Posterior vena cava (tissue), 2 donors: ENCODE measurements at regions of chr10 and their contacts with region 1.

Region 1: DNA sequence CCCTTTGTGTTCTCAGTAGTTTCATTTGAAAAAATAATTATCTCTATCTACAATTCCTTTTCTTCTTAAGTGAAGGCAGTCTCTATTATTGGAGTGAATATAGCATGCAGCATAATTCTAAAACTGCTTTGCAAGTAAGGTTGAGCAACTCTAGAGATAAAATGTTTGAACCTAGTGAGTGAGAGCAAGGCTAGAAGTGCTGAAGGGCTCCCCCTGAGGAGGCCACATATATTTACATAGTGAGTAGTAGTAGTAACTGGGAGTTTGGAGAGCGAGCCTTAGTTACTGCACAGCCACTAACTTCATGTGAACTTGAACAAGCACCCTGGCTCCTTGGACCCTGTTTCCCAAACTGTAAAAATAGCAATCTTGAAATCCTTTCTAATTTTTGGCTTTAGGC is 141.5 kb upstream of the DKK1 start:
- DNase-seq: no peak

Region 2: GRCh38 chr10:50538555-50539398 is 1633.8 kb before region 1 on chr10:
- intact Hi-C with region 1: no loop called
- DNase-seq: no peak

Region 3: GRCh38 chr10:52056296-52056695 is 116.3 kb before region 1 on chr10:
- intact Hi-C with region 1: no loop called
- DNase-seq: no peak

Region 4: DNA sequence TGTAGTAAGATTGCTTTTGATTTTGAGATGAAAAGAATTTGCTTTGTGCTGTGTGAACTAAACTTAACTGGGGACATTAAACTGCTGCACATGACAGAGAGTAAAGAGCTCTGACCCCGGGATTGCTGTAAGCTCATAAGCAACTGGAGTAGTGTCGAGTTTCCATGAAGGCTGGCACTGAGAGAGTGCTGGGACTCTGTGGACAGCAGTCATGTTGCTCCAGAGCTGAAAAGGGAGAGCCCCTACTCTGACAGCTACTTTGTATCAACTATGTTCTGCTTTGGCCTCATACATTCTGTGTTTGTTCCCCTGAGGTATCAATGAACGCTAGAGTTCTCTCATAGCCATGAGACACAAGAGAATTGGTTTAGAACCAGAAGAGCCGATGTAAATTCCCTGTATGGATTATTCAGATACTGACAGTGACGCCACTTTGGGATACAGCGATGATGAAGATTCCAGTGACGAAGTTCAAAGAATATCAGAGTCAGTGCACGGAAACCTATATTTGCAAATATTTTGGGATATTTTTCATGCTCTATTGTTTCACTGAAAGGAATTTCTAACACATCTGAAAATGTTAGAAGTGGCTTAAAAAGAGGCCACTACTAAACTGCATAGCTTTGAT is 44.4 kb before region 1 on chr10:
- intact Hi-C with region 1: loop called in 1 of 2 experiments (anchors 10 kb)
- DNase-seq: no peak

Region 5: DNA sequence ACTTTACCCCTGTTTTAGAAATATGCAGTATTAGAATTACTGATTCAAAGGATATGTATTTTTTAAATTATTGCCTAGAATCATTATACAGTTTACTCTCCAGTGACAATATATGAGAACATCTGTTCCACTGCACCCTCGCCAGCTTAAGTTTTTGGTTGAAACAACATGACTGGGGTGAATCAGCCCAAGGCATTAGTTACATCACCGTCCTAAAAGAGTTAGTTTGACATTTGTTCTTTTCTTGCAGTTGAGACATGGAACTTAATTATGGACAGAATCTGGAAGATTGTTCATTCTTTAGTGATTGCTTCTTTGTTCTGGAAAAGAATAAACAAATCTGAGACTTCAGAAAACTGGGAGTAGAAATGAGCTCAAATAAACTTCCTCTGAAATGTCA is 25.8 kb before region 1 on chr10:
- intact Hi-C with region 1: no loop called
- DNase-seq: no peak